ENCODE measurements at regions of chr4 and their contacts with region 1.

Region 1: GRCh38 chr4:88818631-88819470 is 121.2 kb upstream of the NAP1L5 start:
- DNase-seq: peak; percentile 45
- H3K27ac ChIP-seq: no peak overlapping the region
- CTCF ChIP-seq: peak; percentile 71

Region 2: DNA sequence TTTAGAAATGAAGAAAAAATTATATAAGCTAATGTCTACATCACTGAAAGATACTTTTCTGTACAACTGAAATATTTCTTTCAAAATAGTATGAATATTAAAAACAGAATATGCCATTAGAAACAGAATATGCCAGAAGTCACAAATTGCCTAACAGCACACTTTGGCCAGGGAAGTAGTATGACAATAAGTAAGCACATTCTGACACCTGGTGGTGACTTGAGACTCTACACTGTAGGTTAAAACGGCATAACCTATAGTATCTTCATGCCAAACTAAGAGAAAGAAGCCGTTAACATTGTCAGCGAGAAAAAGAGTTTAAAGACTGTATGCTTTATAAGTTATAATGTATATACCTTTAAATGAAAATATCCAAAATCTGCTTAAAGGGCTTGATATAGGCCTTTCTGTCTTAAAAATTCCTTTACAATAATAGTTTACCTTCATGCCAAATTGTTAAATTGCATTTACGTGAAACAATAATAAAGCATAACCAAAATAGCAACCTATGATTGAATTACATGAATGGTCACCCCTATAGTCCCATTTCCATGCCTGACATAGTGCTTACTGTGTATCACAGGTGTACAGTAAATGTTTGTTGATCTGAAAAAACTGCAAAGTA is 205.3 kb after region 1 on chr4:
- CTCF ChIA-PET with region 1: interaction called, 89 read pairs
- POLR2A ChIA-PET with region 1: no interaction called
- DNase-seq: peak; percentile 70
- H3K27ac ChIP-seq: no peak overlapping the region
- CTCF ChIP-seq: peak; percentile 76

Region 3: GRCh38 chr4:89031272-89031671 is 212.4 kb after region 1 on chr4:
- CTCF ChIA-PET with region 1: interaction called, 13 read pairs
- POLR2A ChIA-PET with region 1: no interaction called
- DNase-seq: no peak
- H3K27ac ChIP-seq: no peak overlapping the region
- CTCF ChIP-seq: no peak

Region 4: DNA sequence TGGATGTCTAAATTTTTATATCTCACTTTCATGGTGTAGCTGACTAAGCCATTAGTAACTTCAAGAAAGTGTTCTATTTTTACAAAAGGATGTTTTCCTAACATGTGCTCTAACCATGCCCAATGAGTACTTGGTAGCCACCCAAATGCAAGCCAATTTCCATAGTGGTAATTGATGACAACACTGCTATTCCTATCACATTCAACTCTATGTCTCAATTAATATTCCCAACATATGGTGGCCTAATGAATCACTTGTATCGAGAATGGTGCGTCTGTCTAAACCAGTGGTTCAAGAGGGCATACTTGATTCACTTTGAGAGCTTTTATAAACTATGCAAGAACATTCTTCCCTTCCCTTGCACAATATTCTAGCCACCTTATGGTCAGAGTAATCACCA is 601.7 kb after region 1 on chr4:
- CTCF ChIA-PET with region 1: no interaction called
- POLR2A ChIA-PET with region 1: no interaction called
- DNase-seq: no peak
- H3K27ac ChIP-seq: no peak overlapping the region
- CTCF ChIP-seq: no peak